ENCODE measurements at regions of chr9 and their contacts with region 1.

Region 1: DNA sequence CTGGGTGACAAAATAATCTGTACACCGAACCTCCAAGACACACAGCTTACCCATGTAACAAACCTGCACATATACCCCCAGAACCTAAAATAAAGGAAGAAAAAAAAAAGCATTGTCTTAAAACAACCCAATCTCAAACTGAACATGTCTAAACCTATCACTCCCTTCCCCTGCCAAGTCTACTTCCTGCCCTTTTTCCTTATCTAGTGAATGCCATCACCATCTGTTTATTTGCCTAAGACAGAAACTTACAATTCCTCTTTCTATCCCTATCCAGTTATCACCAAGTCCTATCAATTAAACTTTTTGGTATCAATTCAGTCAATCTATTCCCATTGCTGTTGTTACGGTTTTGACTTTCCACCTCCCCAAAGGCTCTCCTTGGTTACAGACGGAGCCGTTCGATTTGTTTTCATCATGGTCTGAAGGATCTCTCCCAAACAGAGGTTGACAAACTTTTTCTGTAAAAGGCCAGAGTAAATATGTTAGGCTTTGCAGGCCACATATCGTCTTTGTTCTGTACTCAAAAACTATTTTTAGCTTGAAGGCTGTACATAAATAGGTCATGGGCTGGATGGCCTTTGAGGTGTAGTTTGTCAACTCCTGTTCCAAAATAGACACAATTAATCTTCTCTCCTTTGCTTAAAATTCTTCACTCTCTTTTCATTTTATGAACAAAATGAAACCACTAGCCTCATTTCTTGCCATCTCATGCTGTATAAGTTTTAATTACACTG is 12.1 kb downstream of the NOL8 start:
- H3K4me3 ChIP-seq: no peak overlapping the region
- H3K27ac ChIP-seq: no peak overlapping the region
- H3K4me1 ChIP-seq: no peaks in the 10 kb centered on the region
- CTCF ChIP-seq: no peak

Region 2: GRCh38 chr9:92058723-92059444 is 254.2 kb before region 1 on chr9:
- CTCF ChIA-PET with region 1: no interaction called
- POLR2A ChIA-PET with region 1: no interaction called
- H3K4me3 ChIP-seq: no peak overlapping the region
- H3K27ac ChIP-seq: no peak overlapping the region
- H3K4me1 ChIP-seq: no peaks in the 10 kb centered on the region
- CTCF ChIP-seq: no peak

Region 3: GRCh38 chr9:92224177-92224576 is 88.9 kb before region 1 on chr9:
- CTCF ChIA-PET with region 1: no interaction called
- POLR2A ChIA-PET with region 1: interaction called, 10 read pairs
- H3K4me3 ChIP-seq: no peak overlapping the region
- H3K27ac ChIP-seq: no peak overlapping the region
- H3K4me1 ChIP-seq: no peaks in the 10 kb centered on the region
- CTCF ChIP-seq: no peak

Measured in HEK293 (cell line).